Activated T-helper 2 cell treated with anti-CD3 and anti-CD28 coated beads, Interferon-gamma antibody, Interleukin-2, Interleukin-4, amounts not matched to agents 10 μg/mL and 5 μg/mL and 100 μg/mL, durations not matched to agents 14 hours and 24 hours and 36 hours (primary cell): ENCODE measurements at regions of chr14 and their contacts with region 1.

Region 1: GRCh38 chr14:75654127-75654732 is 6.4 kb downstream of the ERG28 start:
- DNase-seq: peak; percentile 69
- H3K4me3 Mint-ChIP-seq: no peak overlapping the region
- H3K27ac Mint-ChIP-seq: peak overlapping the region; percentile 53
- H3K4me1 Mint-ChIP-seq: peaks cover 14% of the 10 kb centered on the region
- H3K27me3 Mint-ChIP-seq: no peaks in the 10 kb centered on the region

Region 2: DNA sequence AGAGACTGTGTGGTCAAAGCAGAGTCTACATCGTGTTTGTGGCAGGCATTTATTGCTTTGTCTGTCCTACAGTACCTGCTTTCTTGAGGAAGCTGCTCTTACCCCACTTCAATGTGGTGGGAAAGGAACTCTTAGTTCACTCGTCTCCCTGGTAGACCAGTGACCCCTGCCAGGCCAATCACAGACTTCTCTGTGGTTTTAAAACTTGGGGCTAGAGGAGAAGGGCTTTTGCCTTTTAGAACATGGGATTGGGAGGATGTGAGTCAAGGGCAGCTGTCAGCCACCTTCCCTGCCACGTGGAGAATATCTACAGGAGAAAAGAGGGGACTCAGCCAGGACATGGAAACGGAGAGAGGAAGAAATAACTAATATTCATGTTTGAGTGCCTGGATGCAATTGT is 441.1 kb before region 1 on chr14:
- intact Hi-C with region 1: no loop called
- DNase-seq: no peak
- H3K4me3 Mint-ChIP-seq: no peak overlapping the region
- H3K27ac Mint-ChIP-seq: no peak overlapping the region
- H3K4me1 Mint-ChIP-seq: peaks cover 12% of the 10 kb centered on the region
- H3K27me3 Mint-ChIP-seq: peaks cover 22% of the 10 kb centered on the region

Region 3: DNA sequence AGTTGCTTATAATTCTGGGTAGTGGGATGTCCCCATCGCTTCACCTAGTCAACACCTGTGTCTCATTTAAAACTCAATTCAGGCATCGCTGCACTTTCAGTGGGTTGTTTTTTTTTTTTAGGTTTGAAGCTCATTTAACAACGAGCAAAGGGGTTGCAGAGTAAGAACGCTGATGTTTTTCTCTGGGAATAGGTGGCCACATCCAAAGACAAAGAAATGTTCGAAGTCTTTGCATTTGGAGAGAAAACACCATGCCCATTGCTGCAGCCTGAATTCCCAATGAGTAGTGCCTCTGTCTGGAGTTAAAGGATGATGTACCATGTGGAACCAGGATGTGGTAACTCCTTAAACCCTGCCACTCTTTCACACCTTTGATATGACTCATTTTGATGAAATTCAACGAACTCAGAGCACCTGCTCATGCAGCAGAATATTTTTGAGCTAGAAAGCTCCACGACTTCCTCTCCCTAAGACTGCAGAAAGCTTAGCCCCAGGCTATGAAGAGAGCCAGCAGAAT is 167.0 kb before region 1 on chr14:
- intact Hi-C with region 1: loop called (anchors 5 kb)
- DNase-seq: peak; percentile 25
- H3K4me3 Mint-ChIP-seq: no peak overlapping the region
- H3K27ac Mint-ChIP-seq: no peak overlapping the region
- H3K4me1 Mint-ChIP-seq: peaks cover 38% of the 10 kb centered on the region
- H3K27me3 Mint-ChIP-seq: no peaks in the 10 kb centered on the region

Region 4: DNA sequence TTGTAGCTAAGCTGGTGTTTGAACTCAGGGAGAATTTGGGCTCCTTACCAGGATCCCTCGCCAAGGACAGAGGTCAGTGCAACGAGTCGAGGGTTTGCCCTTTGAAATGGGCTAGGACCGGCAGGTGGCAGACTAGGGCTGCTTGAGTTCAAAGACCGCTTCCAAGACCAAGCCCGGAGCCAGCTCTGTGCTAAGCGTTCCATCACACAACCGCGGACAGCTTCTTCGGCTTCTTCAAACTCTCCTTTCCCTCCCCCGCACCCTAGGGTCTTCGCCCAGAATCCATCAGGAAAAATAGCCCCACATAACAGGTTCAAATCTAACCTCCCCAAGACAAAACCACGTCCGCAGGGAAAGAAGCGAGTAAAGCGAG is 76.5 kb before region 1 on chr14:
- intact Hi-C with region 1: loop called (anchors 1 kb)
- DNase-seq: peak; percentile 60
- H3K4me3 Mint-ChIP-seq: peak overlapping the region; percentile 81
- H3K27ac Mint-ChIP-seq: peak overlapping the region; percentile 42
- H3K4me1 Mint-ChIP-seq: peaks cover 19% of the 10 kb centered on the region
- H3K27me3 Mint-ChIP-seq: peaks cover 3% of the 10 kb centered on the region

Region 5: DNA sequence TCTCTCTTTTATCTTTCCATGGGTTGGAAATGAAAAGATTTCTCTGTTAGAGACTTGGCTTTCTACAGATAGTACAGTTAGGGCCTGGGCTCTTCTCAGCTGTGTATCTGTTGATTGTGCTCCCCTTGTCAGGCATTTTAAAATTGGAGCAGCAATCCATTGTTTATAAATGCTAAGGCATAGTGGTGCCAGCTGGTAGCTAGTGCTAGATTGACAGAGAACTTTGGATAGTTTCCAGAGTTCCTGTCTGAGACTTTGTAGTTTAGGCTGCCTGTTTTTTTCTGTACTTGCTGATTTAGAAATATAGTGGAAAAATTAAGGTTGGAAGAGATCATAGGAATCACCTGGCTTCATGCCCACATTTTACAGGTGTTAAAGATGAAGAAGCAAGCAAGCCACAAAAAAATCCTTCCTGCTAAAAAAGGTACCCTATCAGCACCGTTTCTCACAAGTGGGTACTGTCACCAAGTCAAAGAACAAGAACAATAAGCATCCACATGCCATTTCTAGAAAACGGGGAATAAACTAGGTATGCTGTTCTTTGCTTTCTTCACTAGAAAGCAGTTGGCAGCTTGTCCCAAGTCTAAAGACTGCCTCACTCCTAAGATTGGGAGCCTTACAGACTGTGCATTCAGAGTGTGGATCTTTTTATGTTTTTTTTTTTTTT is 13.0 kb after region 1 on chr14:
- intact Hi-C with region 1: no loop called
- DNase-seq: no peak
- H3K4me3 Mint-ChIP-seq: no peak overlapping the region
- H3K27ac Mint-ChIP-seq: no peak overlapping the region
- H3K4me1 Mint-ChIP-seq: peaks cover 9% of the 10 kb centered on the region
- H3K27me3 Mint-ChIP-seq: no peaks in the 10 kb centered on the region